Activated CD4-positive, alpha-beta T cell treated with anti-CD3 and anti-CD28 coated beads for 36 hours (primary cell): ENCODE measurements at regions of chr17 and their contacts with region 1.

Region 1: DNA sequence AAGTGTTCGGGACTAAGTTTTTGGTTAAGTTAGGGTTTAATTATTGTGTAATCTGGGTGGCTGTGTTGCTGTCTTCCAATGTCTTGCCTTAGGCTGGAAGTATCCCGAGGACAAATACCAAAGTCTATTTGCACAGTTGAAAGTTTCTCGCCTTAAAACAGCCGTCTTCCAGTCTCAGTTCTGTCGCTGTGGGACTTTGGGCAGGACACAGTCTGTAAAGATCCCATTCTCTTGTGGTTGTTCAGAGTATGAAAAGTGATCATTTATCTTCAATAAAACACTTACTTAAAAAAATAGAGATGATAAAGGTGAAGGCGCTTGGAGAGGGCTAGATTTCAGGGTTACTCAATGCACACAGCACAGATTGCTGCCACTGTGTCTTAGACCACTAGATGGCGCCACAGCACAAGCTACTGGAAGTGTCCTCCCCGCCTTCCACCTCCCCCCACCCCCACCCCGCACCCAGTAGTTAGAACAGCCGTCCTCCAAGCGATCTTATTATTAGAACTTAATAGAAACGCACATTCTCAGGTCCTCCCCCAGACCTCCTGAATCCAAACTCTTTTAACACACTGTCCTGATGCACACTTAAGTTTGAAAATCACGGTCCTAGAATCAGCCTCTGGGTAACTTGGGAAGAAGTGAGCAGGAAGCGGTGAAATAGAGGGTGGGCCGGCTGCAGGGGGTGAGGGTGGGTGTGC is 45.9 kb downstream of the AKAP1 start:
- DNase-seq: peak; percentile 91
- ATAC-seq: peak; percentile 84
- H3K4me3 Mint-ChIP-seq: no peak overlapping the region
- H3K27ac Mint-ChIP-seq: no peak overlapping the region
- H3K4me1 Mint-ChIP-seq: peaks cover 5% of the 10 kb centered on the region
- H3K27me3 Mint-ChIP-seq: no peaks in the 10 kb centered on the region

Region 2: DNA sequence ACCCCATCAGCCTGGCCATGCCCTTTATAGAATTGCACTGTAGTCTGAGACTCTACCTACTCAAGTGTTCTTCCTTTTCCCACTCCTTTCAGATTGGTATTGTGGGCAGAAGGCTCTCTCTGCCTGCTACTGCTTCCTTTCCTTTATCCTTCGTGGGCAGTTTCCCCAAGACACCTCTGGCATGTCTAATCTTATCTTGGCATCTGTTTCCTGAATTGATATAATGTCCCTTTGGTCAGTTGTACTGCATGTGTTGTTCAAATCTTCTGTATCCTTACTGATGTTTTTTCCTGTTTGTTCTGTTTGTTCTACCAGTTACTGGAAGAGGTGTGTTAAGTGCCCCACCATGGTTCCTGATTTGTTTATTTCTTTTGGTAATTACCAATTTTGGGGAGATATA is 95.9 kb after region 1 on chr17:
- CTCF ChIA-PET with region 1: no interaction called
- POLR2A ChIA-PET with region 1: no interaction called
- intact Hi-C with region 1: loop called in 1 of 2 experiments (anchors 5 kb)
- DNase-seq: no peak
- ATAC-seq: no peak
- H3K4me3 Mint-ChIP-seq: no peak overlapping the region
- H3K27ac Mint-ChIP-seq: no peak overlapping the region
- H3K4me1 Mint-ChIP-seq: no peaks in the 10 kb centered on the region
- H3K27me3 Mint-ChIP-seq: peaks cover 8% of the 10 kb centered on the region

Region 3: DNA sequence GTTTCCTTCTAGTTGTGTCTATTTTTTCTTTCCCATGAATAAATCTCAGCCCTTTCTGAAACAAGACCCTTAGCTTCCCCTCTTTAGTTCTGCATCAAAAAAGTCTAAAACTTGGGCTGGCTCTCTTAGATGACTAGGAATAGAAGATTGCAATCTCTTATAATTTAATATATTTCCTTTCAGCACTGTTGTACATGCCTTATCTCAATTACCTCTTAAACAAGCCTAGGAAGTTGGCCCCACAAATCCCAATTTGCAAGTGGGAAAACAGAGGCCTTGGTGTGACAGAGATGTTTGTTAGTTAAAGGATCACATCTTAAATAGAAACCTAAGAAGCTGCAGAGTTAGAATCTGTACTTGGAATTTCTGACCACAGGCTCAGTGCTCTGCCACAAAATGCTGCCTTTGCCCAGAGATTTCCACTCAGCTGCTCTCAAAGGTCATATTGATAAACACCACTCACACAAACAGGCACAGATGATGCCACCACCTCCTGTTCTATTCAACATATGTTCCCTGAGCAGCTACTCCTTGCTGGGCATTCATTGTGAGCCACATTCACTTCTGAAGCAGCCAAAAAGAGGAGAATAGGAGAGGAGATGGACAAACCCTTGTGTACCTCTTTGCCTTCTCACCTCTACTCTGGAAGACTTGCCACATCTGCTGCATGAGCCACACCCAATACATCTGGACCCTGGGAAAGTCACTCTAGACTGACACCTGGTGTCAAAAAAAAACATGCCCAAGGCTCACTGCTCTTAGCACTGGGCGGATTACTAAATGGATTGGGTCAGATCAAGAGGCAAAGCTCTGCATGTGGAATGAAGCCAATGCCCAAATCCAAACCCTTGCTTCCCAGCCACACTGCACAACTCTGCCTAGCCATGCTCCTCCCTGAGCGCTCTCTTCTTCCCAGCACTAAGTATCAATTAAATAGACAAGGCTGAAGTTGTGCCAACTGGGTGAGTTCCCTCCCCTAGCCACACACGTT is 608.8 kb after region 1 on chr17:
- CTCF ChIA-PET with region 1: interaction called, 3 read pairs
- POLR2A ChIA-PET with region 1: no interaction called
- intact Hi-C with region 1: loop called in 1 of 2 experiments (anchors 1 kb)
- DNase-seq: peak; percentile 14
- ATAC-seq: peak; percentile 61
- H3K4me3 Mint-ChIP-seq: no peak overlapping the region
- H3K27ac Mint-ChIP-seq: no peak overlapping the region
- H3K4me1 Mint-ChIP-seq: no peaks in the 10 kb centered on the region
- H3K27me3 Mint-ChIP-seq: peaks cover 7% of the 10 kb centered on the region